ENCODE measurements at regions of chr14 and their contacts with region 1.

Region 1: DNA sequence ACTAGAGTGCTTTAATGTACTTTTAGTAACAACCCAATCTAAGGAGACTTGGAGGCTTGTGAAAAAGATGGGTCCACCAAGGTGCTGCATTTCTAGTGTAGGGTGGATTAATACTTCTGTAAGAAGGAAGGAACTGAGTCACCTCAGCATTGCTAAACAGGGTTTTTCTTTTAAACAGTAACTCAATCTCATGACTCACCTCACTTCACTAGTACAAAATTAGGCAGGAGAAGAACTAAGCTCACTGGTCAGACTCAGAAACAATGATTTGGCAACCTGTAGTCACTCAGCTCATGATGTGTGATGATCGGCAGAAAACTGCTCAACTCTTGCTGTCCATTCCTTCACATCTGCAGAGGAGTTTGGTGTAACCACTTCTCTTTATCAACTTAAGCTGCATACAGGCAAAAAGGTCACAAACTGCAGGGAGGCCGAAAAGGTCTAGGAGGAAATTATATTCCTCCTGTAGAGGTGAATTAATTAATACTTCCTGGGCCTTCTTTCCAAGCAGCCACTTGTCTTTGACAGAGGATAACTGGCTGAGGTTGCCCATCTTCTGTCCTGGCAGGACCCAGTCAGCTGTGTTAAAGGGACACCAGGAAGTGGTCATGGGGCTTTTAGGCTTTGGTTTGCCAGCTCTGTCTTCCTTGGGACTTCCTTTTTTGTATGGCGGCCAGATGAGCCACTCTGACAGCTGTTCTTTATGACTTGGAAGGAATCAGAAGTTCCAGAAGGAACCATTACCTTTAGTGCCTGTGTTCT is 466.9 kb downstream of the FUT8 start:
- DNase-seq: peak; percentile 18
- H3K4me3 Mint-ChIP-seq: no peak overlapping the region
- H3K27ac Mint-ChIP-seq: peak overlapping the region; percentile 48
- H3K4me1 Mint-ChIP-seq: peaks cover 31% of the 10 kb centered on the region
- H3K27me3 Mint-ChIP-seq: no peaks in the 10 kb centered on the region

Region 2: DNA sequence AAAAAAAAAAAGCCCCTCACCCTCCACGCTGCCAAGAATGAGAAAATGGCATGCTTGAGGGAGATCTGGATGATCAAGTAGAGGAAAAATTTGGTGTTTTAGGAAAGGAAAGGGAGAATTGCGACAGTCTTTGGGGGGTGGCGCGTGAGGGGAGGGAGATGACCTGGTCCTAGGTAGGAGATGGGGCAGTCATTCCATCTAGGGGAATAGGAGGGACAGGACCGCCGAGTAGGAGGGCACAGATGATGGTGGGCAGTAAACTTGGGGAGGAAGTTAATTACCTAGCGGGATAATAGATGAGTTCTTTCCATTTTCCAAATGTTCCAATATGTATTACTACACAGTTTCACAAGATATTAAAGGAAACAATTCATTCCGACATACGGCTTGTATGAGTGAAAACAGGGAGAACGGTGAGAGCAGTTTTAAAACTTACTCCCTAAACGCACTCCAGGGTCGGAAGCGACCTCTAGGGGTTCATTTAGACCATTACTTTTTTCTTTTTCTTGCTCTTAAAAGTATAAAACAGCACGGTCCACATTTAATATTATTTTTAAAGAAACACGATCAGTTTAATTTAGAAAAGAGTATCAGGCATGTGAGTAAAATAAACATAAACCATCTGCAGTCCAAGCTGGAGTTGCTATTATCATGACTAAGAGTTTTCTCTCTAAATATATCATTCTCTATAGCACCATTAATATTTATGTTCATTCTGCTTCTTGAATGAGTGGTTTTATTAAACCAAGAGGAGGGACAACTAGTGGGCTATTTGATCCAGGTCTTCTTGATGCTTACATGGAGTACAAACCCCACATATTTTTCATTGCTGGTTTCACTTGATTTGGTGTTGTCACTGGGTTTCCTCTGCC is 895.8 kb before region 1 on chr14:
- CTCF ChIA-PET with region 1: no interaction called
- intact Hi-C with region 1: no loop called
- DNase-seq: peak; percentile 59
- H3K4me3 Mint-ChIP-seq: peak overlapping the region; percentile 41
- H3K27ac Mint-ChIP-seq: no peak overlapping the region
- H3K4me1 Mint-ChIP-seq: peaks cover 11% of the 10 kb centered on the region
- H3K27me3 Mint-ChIP-seq: no peaks in the 10 kb centered on the region

Region 3: GRCh38 chr14:65373679-65374039 is 505.8 kb before region 1 on chr14:
- CTCF ChIA-PET with region 1: no interaction called
- intact Hi-C with region 1: no loop called
- DNase-seq: no peak
- H3K4me3 Mint-ChIP-seq: no peak overlapping the region
- H3K27ac Mint-ChIP-seq: no peak overlapping the region
- H3K4me1 Mint-ChIP-seq: peaks cover 32% of the 10 kb centered on the region
- H3K27me3 Mint-ChIP-seq: no peaks in the 10 kb centered on the region

Region 4: DNA sequence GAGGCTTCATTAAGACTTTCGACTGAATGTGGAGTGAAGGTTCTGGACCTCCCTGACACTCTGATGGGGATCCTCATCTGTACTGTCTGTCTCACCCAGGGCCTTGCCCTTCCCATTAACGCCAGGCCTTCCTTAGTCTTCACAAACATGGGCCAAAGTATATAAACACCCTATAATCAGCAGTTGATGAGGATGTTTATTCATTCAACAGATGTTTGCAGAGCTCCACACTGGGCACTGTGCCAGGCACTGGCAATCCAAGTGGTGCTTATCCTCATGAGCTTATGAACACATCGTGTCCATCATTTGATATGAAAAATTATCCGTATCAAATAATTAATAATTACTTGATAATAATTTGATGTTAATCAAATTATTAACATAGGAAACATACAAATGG is 12.5 kb before region 1 on chr14:
- CTCF ChIA-PET with region 1: no interaction called
- intact Hi-C with region 1: loop called (anchors 1 kb)
- DNase-seq: no peak
- H3K4me3 Mint-ChIP-seq: no peak overlapping the region
- H3K27ac Mint-ChIP-seq: no peak overlapping the region
- H3K4me1 Mint-ChIP-seq: peaks cover 43% of the 10 kb centered on the region
- H3K27me3 Mint-ChIP-seq: no peaks in the 10 kb centered on the region

Region 5: GRCh38 chr14:65927931-65928356 is 48.5 kb after region 1 on chr14:
- CTCF ChIA-PET with region 1: interaction called, 3 read pairs
- intact Hi-C with region 1: loop called (anchors 1 kb)
- DNase-seq: peak; percentile 96
- H3K4me3 Mint-ChIP-seq: no peak overlapping the region
- H3K27ac Mint-ChIP-seq: peak overlapping the region; percentile 22
- H3K4me1 Mint-ChIP-seq: peaks cover 41% of the 10 kb centered on the region
- H3K27me3 Mint-ChIP-seq: no peaks in the 10 kb centered on the region